ENCODE measurements at regions of chr20 and their contacts with region 1.

Region 1: DNA sequence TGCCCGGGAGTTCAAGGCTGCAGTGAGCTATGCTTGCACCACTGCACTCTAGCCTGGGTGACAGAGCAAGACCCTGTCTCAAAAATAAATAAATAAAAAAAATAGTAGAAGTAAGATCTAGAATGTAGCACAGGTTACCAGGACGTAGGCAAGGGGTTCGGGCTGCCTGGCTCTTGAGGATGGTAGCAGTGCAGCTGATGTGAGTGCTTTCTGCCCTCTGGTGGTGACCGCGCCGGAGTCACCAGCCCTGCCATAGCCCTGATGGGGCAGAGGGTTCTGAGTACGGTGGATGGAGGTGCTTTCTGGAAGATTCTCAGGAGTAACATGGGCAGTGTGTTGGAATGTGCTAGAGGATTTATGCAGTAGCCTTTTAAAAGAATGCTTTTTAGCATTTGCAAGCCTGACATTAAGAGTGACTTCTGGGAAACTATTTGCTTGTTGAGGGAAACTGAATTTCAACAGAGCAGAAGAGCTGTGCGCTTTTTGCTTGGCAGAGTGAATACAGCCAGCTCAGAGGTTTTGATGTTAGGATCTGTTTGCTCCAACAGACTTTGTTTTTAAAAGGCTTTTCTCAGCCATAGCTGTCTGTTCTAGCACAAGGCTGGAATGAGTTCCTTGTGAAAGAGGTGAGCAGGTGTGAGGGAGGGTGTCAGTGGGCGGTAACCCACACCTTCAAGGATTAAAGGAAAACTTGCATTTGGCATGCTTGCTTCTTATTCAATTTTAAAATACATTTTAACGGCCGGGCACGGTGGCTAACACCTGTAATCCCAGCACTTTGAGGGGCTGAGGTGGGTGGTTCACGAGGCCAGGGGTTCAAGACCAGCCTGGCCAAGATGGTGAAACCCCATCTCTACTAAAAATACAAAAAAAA is 65.9 kb downstream of the PTPN1 start:
- DNase-seq: peak; percentile 88
- ATAC-seq: peak; percentile 66

Region 2: DNA sequence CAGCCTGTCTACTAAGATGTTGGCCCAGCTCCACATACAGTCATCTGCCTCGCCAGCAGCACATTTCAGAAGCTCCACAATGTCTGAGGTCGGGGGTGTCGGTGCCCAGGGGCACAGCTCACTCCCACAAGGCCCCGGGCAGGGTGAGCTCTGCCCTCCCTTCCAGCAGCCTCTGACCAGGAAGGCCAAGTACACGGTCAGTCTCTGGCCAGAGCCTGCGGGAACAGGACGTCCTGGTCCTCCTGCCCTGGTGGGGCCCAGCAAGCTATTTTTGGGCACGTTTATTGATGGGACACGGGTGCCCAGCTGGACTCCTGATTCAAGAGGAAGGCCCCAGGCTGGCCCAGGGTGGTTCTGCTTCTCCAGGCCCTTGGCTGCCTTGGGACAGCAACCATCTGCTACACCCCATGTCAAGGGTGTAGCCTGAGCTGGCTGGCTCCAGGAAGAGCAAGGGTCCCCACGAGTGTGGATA is 180.8 kb before region 1 on chr20:
- intact Hi-C with region 1: loop called (anchors 5 kb)
- DNase-seq: peak; percentile 91
- ATAC-seq: peak; percentile 84

Region 3: GRCh38 chr20:50478162-50479036 is 97.7 kb before region 1 on chr20:
- intact Hi-C with region 1: loop called (anchors 5 kb)
- DNase-seq: peak; percentile 83
- ATAC-seq: peak; percentile 70

Region 4: DNA sequence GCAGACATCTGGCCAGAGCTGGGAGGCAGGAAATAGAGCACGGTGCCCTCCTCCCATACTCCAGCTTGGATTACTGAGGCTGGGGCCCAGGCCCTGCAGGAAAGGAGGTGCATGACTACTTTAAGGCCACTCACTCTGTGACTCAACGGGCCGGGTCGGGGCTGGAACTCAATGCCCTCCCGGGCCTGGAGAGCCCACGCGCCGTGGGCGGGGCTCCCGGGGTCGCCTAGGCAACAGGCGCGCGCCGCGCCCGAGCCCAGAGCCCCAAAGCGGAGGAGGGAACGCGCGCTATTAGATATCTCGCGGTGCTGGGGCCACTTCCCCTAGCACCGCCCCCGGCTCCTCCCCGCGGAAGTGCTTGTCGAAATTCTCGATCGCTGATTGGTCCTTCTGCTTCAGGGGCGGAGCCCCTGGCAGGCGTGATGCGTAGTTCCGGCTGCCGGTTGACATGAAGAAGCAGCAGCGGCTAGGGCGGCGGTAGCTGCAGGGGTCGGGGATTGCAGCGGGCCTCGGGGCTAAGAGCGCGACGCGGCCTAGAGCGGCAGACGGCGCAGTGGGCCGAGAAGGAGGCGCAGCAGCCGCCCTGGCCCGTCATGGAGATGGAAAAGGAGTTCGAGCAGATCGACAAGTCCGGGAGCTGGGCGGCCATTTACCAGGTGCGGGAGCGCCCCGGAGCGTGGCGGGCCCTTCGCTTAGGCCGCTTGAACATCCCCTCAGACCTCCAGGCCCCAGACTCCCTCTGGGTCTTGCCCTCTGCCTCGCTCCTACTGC is 66.0 kb before region 1 on chr20 and contains the start of gene PTPN1:
- intact Hi-C with region 1: loop called (anchors 2 kb)
- DNase-seq: peak; percentile 99
- ATAC-seq: peak; percentile 99
- total RNA-seq, gene PTPN1: 23.3 TPM

Region 5: DNA sequence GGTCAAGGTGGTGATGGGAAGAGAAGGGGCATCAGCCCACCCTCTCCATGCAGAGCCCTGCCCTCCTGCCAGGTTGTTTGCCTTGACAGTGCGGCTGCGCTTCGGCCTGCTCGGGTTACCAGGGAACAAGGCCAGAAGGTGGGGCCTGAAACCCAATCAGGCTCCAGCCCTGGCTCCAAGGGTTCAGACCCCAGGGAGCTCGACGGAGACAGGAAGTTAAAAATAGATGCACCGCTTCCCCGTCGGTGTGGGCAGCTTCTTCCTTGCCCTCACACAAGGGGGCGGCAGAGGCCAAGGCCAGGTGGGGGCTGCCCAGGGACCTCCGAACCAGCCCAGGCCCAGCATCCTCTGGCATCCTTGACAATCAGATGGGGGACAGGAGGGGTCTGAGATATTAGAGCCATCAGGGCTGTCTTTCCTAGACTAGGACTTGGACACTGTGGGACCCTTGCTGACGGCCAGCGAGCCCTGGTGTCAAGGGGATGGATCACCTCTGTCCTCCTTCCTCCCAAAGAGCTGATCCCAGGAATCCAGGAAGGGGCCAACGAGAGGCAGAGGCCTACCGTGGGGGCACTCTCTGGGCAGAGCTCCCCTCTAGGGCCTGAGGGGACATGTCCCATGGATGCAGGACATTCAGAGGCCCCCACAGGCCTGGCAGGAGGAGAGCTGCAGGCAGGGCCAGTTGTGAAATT is 50.0 kb after region 1 on chr20:
- intact Hi-C with region 1: loop called (anchors 5 kb)
- DNase-seq: peak; percentile 79
- ATAC-seq: peak; percentile 83

Region 6: GRCh38 chr20:50645253-50646118 is 69.4 kb after region 1 on chr20:
- intact Hi-C with region 1: no loop called
- DNase-seq: peak; percentile 81
- ATAC-seq: peak; percentile 71